CD4-positive, alpha-beta memory T cell (primary cell): ENCODE measurements at regions of chr12 and their contacts with region 1.

Region 1: GRCh38 chr12:75489613-75490210 is 9.2 kb downstream of the GLIPR1 start:
- DNase-seq: peak in 1 of 5 donors; percentile 41
- H3K4me3 ChIP-seq: no peak overlapping the region
- H3K4me3 Mint-ChIP-seq: peak overlapping the region in 7 of 8 donors; percentile 2 to 72 (median 28)
- H3K27ac ChIP-seq: peak overlapping the region; percentile 3
- H3K27ac Mint-ChIP-seq: peak overlapping the region; percentile 57 to 92 (median 83)
- H3K4me1 ChIP-seq: peaks cover 55% of the 10 kb centered on the region
- H3K4me1 Mint-ChIP-seq: peaks cover 47 to 81% (median 59%) of the 10 kb centered on the region in 4 donors
- H3K27me3 ChIP-seq: no peaks in the 10 kb centered on the region
- H3K27me3 Mint-ChIP-seq: no peaks in the 10 kb centered on the region

Region 2: DNA sequence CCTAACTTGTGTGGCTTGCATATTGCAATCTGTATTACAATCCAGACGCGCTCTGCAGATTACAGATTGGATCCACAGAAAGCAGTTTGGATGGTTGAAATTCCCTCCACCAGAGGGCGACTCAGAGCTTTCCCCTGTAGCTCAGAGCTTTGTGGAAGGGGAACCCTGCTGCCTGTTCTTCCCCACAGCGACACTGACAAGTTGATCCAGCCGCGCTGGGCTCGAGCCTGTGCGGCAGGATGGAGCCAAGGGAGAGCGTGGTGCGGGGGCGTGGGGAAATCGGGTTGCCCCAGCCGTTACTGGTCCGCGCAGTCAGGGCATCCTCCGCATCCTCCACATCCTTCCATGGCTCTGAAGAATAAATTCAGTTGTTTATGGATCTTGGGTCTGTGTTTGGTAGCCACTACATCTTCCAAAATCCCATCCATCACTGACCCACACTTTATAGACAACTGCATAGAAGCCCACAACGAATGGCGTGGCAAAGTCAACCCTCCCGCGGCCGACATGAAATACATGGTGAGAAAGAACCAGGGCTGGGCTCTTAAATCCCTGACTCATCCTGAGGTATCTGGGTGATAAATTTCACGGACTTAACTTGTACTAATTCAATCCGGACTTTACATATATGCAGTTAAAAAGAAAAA is 155.2 kb before region 1 on chr12 and contains the start of gene GLIPR1L1:
- CTCF ChIA-PET with region 1: interaction called, 35 read pairs
- POLR2A ChIA-PET with region 1: no interaction called
- intact Hi-C with region 1: loop called (anchors 1 kb)
- DNase-seq: peak; percentile 76 to 82 (median 77)
- H3K4me3 ChIP-seq: peak within 1 kb of the TSS in 1 of 2 donors; percentile 54
- H3K4me3 Mint-ChIP-seq: peak within 1 kb of the TSS; percentile 70 to 86 (median 80)
- H3K27ac ChIP-seq: no peak within 1 kb of the TSS
- H3K27ac Mint-ChIP-seq: peak within 1 kb of the TSS in 1 of 7 donors; percentile 54
- H3K4me1 ChIP-seq: peaks cover 21% of the 10 kb centered on the region
- H3K4me1 Mint-ChIP-seq: peaks cover 13 to 21% (median 17%) of the 10 kb centered on the region in 4 donors
- H3K27me3 ChIP-seq: peaks cover 6% of the 10 kb centered on the region
- H3K27me3 Mint-ChIP-seq: peaks cover 6 to 12% of the 10 kb centered on the region in 2 donors
- total RNA-seq, gene GLIPR1L1: not detected